Colonic mucosa (tissue), 4 donors: ENCODE measurements at regions of chr12 and their contacts with region 1.

Region 1: GRCh38 chr12:7995266-7995963 is 37.1 kb upstream of the FOXJ2 start:
- DNase-seq: peak; percentile 72
- H3K4me3 ChIP-seq: no peak overlapping the region
- H3K27ac ChIP-seq: peak overlapping the region; percentile 63
- H3K4me1 ChIP-seq: no peaks in the 10 kb centered on the region
- H3K27me3 ChIP-seq: no peaks in the 10 kb centered on the region
- CTCF ChIP-seq: peak; percentile 66

Region 2: GRCh38 chr12:7859552-7859951 is 135.9 kb before region 1 on chr12:
- intact Hi-C with region 1: loop called (anchors 2 kb)
- DNase-seq: no peak
- H3K4me3 ChIP-seq: no peak overlapping the region
- H3K27ac ChIP-seq: no peak overlapping the region
- H3K4me1 ChIP-seq: no peaks in the 10 kb centered on the region
- H3K27me3 ChIP-seq: no peaks in the 10 kb centered on the region
- CTCF ChIP-seq: no peak

Region 3: GRCh38 chr12:7933255-7933729 is 62.1 kb before region 1 on chr12:
- intact Hi-C with region 1: loop called (anchors 2 kb)
- DNase-seq: peak; percentile 59
- H3K4me3 ChIP-seq: peak overlapping the region; percentile 46
- H3K27ac ChIP-seq: peak overlapping the region; percentile 50
- H3K4me1 ChIP-seq: no peaks in the 10 kb centered on the region
- H3K27me3 ChIP-seq: no peaks in the 10 kb centered on the region
- CTCF ChIP-seq: peak; percentile 53